ENCODE measurements at regions of chr10 and their contacts with region 1.

Region 1: GRCh38 chr10:125160856-125161706 is 718 bp upstream of the CTBP2 start:
- DNase-seq: no peak
- H3K4me3 ChIP-seq: peak overlapping the region; percentile 92 to 99 (median 94)
- H3K27ac ChIP-seq: peak overlapping the region; percentile 95 to 99 (median 98)
- H3K4me1 ChIP-seq: peaks cover 28 to 34% (median 32%) of the 10 kb centered on the region in 4 donors
- H3K27me3 ChIP-seq: no peaks in the 10 kb centered on the region
- CTCF ChIP-seq: peak; percentile 41 to 64 (median 49)
- EP300 ChIP-seq: no peak
- POLR2A ChIP-seq: no peak

Region 2: DNA sequence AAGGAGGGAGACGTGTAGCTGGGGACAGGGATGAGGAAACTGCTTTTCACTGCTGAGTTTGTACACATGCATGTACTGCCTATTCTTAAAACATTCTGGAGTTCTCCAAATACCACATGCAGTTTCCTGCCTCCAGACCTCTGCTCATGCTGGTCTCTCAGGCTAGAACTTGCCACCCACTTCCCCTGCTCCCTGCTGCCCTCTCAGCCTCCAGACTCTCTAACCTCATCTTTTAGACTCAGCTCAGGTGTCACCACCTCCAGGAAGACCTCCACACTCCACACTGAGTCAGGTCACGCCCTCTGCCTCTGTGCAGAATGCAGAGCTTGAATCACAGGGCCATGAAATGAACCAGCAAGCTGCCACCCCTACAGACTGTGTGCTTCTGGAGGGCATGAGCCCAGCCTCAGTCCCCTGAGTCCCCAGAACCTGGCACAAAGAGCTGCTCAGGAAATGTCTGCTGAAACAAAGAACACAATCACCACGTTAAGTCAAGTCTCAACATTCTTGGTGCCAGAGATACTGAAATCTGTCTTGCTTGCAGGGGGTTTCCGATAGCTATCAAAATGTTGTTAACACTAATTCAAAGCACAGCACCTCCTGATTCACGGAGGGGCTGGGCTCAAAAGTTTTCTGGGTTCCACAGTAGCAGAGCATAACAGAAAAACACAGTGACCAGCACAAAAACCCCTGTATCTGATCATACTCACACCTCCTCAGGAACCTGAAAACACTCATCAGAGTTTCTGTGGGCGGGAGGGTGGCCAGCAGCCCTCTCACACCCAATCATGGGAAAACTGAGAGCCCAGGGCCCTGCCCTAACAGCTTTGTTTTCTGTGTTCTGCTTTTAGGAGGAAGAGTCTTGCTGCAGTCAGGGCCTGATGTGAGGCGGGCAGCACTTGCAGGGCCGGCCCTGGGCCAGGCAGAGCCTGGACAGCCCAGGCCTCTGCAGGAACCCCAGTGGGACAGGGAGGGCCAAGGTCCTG is 438.0 kb before region 1 on chr10:
- intact Hi-C with region 1: no loop called
- DNase-seq: no peak
- H3K4me3 ChIP-seq: peak overlapping the region in 1 of 4 donors; percentile 17
- H3K27ac ChIP-seq: peak overlapping the region; percentile 75 to 82 (median 80)
- H3K4me1 ChIP-seq: peaks cover 92 to 99% (median 98%) of the 10 kb centered on the region in 4 donors
- H3K27me3 ChIP-seq: no peaks in the 10 kb centered on the region
- CTCF ChIP-seq: no peak
- EP300 ChIP-seq: no peak
- POLR2A ChIP-seq: no peak

Region 3: DNA sequence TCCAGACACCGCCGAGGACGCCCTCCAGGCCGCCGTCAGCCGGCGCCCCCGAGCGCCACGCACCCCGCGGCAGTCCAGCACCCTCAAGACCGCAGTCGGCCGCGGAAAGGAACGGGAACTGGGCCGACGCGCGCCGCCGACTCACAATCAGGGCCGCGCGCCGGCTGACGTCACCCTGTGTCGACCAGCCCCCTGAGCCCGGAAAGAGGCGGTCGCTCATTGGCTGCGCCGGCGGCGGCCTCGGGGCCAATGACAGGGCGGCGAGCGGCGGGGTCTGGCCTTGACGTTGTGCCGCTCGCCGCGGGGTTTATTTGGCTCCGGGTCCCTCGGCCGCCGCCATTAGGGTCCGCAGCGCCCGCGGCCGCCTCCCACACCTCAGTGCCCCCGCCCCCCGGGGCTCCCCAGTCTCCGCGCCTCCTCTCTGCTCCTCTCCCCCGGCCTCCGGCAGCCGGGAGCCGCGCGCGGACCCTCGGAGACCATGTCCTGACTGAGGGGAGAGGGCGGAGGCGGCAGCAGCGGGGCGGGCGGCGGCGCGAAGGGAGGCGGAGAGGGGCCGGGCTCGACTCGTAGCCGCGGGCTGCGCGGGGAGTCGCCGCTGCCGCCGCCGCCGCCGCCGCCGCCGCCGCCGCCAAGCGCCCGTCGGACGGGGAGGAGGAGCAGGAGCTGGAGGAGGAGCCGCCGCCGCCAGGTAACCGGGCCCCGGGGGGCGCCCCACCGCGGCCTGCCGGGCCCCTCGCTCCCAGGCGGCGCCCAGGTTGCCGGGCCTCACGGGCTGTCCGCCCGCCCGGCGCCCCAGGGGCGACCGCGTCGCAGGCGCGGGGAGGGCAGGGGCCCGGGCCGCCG is 244.3 kb before region 1 on chr10:
- intact Hi-C with region 1: loop called (anchors 10 kb)
- DNase-seq: peak; percentile 100
- H3K4me3 ChIP-seq: peak overlapping the region; percentile 93 to 98 (median 94)
- H3K27ac ChIP-seq: peak overlapping the region; percentile 98 to 100 (median 98)
- H3K4me1 ChIP-seq: peaks cover 43 to 55% (median 52%) of the 10 kb centered on the region in 4 donors
- H3K27me3 ChIP-seq: no peaks in the 10 kb centered on the region
- CTCF ChIP-seq: no peak
- EP300 ChIP-seq: no peak
- POLR2A ChIP-seq: peak; percentile 83

Region 4: GRCh38 chr10:124999433-125000365 is 161.4 kb before region 1 on chr10:
- intact Hi-C with region 1: loop called (anchors 5 kb)
- DNase-seq: no peak
- H3K4me3 ChIP-seq: peak overlapping the region in 1 of 4 donors; percentile 28
- H3K27ac ChIP-seq: peak overlapping the region; percentile 59 to 74 (median 70)
- H3K4me1 ChIP-seq: peaks cover 38 to 65% (median 47%) of the 10 kb centered on the region in 4 donors
- H3K27me3 ChIP-seq: no peaks in the 10 kb centered on the region
- CTCF ChIP-seq: no peak
- EP300 ChIP-seq: no peak
- POLR2A ChIP-seq: no peak

Region 5: GRCh38 chr10:125060826-125061556 is 100.1 kb before region 1 on chr10:
- intact Hi-C with region 1: loop called (anchors 5 kb)
- DNase-seq: peak; percentile 95
- H3K4me3 ChIP-seq: peak overlapping the region; percentile 10 to 30 (median 29)
- H3K27ac ChIP-seq: peak overlapping the region; percentile 85 to 87 (median 87)
- H3K4me1 ChIP-seq: peaks cover 99 to 100% (median 99%) of the 10 kb centered on the region in 4 donors
- H3K27me3 ChIP-seq: no peaks in the 10 kb centered on the region
- CTCF ChIP-seq: peak; percentile 83 to 91 (median 86)
- EP300 ChIP-seq: no peak
- POLR2A ChIP-seq: no peak

Region 6: DNA sequence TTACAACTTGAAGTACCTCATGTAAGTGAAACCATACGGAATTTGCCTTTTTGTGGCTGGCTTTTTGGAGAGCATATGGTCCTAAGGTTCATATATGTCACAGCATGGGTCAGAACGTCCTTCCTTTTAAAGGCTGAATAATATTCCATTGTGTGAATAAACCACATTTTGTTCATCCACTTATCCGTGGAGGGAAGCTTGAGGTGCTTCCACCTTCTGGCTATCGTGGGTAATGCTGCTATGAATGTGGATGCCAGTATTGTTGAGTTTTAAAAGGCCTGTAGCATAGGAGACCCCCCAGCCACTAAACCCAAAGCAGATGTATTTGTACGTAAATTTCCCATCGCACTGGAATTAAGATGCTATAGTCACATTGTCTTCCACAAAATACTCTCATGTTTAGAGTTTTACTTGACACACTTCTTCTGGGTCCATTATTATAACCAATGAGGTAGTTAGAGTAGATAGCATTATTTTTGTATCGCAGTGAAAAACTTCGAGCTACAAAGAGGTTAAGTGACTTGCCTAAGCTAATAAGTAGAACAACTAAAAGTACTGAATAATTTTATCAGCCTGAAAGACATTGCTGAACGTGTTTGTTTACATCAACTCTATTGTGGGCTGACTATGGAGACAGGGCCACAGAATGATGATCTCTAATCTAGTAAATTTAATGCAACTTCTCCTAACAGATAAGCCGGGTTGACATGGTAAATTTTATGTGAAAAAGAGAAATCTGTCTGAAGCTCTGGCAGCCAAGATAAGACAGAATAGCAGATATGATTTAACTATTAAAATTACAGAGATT is 182.2 kb after region 1 on chr10:
- intact Hi-C with region 1: loop called (anchors 5 kb)
- DNase-seq: no peak
- H3K4me3 ChIP-seq: no peak overlapping the region
- H3K27ac ChIP-seq: no peak overlapping the region
- H3K4me1 ChIP-seq: no peaks in the 10 kb centered on the region
- H3K27me3 ChIP-seq: no peaks in the 10 kb centered on the region
- CTCF ChIP-seq: peak; percentile 54 to 67 (median 60)
- EP300 ChIP-seq: no peak
- POLR2A ChIP-seq: no peak

Region 7: GRCh38 chr10:125462845-125463244 is 301.8 kb after region 1 on chr10:
- intact Hi-C with region 1: no loop called
- DNase-seq: no peak
- H3K4me3 ChIP-seq: no peak overlapping the region
- H3K27ac ChIP-seq: no peak overlapping the region
- H3K4me1 ChIP-seq: no peaks in the 10 kb centered on the region
- H3K27me3 ChIP-seq: no peaks in the 10 kb centered on the region
- CTCF ChIP-seq: no peak
- EP300 ChIP-seq: no peak
- POLR2A ChIP-seq: no peak

Measured in esophagus muscularis mucosa (tissue), 4 donors.